Activated naive CD4-positive, alpha-beta T cell treated with anti-CD3 and anti-CD28 coated beads for 36 hours (primary cell): ENCODE measurements at regions of chr4 and their contacts with region 1.

Region 1: DNA sequence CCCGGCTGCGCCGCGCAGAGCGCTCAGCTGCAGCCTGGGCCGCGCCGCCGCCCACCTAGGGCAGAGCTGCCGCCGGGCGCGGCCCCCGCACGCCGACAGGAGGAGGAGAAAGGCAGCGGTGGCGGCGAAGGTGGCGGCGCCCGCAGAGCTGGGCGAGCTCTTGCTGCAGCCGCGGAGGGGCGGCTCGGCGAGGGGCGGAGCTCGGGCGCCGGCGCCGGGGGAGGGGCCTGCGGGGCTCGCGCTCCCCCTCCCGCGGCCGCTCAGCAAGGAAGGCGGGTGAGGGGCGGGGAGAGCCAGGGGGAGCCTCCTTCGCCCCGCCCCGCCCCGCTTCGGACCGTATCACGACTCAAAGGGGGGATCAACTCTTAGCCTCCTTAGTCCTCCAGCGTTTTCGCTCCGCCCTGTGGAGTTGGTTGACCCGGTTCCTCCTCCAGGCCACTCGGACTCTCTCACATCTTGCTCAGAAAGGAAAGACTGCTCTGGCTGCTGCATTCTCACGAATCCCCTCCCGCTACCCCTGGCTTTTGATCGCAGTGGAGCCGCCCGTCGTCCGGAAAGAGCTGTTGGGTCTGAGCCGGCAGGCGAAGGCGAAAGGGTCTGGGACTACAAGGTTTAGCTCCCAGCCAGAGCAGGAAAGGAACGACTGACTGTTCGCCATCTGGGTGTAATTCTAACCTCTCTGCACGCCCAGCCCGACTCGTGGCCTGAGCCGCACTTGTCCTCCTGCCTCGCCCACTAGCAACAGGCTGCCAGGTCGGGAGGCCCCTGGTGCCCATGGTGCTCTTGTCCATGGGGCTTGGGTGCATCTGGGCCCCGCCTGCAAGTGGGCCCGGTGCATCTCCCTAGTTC is at the start of gene ATP8A1:
- DNase-seq: peak; percentile 92
- H3K4me3 Mint-ChIP-seq: peak within 1 kb of the TSS; percentile 94
- H3K27ac Mint-ChIP-seq: peak within 1 kb of the TSS; percentile 99
- H3K4me1 Mint-ChIP-seq: peaks cover 42% of the 10 kb centered on the region
- H3K27me3 Mint-ChIP-seq: no peaks in the 10 kb centered on the region
- total RNA-seq, gene ATP8A1: 27.6 to 32.0 TPM

Region 2: GRCh38 chr4:41934815-41935651 is 722.1 kb before region 1 on chr4 and contains the start of gene TMEM33:
- CTCF ChIA-PET with region 1: no interaction called
- intact Hi-C with region 1: loop called (anchors 10 kb)
- DNase-seq: peak; percentile 87
- H3K4me3 Mint-ChIP-seq: peak within 1 kb of the TSS; percentile 97
- H3K27ac Mint-ChIP-seq: peak within 1 kb of the TSS; percentile 88
- H3K4me1 Mint-ChIP-seq: peaks cover 38% of the 10 kb centered on the region
- H3K27me3 Mint-ChIP-seq: no peaks in the 10 kb centered on the region
- total RNA-seq, gene TMEM33: 33.9 to 34.6 TPM

Region 3: DNA sequence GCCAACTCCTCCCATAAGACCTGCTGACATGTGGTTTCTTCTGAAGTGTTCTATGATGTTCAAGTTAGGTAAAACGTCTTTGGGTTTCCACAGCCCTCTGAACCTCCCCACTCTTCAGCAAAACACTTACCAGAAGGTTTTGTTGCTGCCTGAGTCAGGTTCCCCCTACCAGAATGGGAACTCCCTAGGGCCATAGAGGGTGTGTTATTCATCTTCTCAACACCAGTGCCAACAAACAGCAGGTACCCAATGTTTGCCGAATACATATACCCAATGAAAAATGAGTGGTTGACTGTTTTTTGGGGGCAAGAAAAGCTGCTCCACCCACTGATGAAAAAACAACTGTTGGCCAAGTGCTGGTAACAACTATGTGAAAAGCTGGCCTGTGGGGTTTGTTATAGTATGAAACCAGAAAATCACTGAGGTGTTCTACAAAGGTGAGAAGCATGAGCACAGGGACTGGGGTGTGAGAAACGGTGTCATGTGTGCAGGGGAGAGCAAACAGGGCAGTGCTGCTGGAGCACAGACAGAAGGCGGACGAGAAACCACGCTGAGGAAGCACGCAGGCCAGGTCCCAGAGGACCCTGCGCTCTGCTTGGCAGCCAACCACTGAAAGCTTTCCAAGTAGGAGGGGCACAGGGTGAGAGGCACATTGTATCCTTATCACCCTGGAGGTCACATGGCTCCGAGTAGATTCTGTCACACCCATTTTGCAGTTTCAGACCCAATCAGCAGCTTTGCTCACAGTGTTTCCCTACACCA is 29.1 kb before region 1 on chr4:
- CTCF ChIA-PET with region 1: interaction called, 3 read pairs
- intact Hi-C with region 1: loop called (anchors 1 kb)
- DNase-seq: peak; percentile 76
- H3K4me3 Mint-ChIP-seq: peak overlapping the region; percentile 47
- H3K27ac Mint-ChIP-seq: peak overlapping the region; percentile 88
- H3K4me1 Mint-ChIP-seq: peaks cover 57% of the 10 kb centered on the region
- H3K27me3 Mint-ChIP-seq: no peaks in the 10 kb centered on the region

Region 4: DNA sequence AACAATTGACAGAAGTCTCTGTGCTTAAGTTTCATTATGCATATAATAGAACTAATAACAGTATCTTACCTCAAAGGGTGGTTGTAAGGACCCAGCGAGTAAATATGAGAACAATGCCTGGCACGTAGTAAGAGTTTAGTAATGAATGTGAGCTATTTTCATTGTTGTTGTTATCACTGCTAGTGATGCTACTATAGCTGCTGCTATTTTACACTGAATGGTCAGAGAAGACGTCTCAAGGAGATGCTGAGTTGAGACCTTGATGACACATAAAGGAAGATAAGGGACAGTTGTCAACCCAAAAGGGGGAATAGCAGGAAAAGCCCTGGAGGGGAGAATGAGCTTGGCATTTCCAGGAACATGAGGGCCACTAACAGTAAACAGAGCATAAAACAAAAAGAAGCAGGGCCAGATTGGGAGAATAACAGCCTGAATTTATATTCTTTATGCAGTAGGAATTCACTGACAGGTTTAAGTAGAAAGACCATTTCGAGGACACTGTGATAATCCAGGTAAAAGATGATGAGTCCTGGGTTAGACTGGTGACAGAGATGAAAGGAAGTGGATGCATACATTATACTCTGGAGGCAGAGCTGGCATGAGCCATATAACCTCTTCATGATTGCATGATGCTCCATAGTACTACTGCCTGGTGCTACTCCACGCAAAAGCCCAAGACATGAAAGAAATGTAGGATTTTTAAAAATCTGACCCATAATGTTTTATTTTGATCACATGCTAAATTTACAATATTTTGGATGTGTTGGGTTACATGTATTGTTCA is 23.4 kb before region 1 on chr4:
- CTCF ChIA-PET with region 1: interaction called, 6 read pairs
- intact Hi-C with region 1: loop called (anchors 1 kb)
- DNase-seq: no peak
- H3K4me3 Mint-ChIP-seq: no peak overlapping the region
- H3K27ac Mint-ChIP-seq: peak overlapping the region; percentile 33
- H3K4me1 Mint-ChIP-seq: peaks cover 73% of the 10 kb centered on the region
- H3K27me3 Mint-ChIP-seq: no peaks in the 10 kb centered on the region

Region 5: DNA sequence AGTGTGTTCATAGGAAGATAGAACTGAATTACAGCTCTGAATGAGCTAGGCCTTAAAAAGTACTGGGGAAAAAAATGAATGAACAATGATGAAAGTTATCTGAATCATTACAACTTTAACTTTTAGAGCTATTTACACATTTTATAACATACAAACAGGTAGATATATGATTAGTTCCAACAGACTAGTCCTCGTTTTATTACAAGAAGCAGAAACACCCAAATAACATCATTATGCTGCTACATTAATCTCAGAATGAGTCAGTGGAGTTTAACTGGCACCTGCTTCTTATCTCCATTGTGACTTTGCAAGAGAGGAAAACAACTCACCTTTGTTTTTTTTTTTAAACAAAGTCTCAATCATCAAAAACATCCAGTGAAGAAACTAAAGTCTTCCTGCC is 15.5 kb before region 1 on chr4:
- CTCF ChIA-PET with region 1: interaction called, 9 read pairs
- intact Hi-C with region 1: loop called (anchors 1 kb)
- DNase-seq: no peak
- H3K4me3 Mint-ChIP-seq: peak overlapping the region; percentile 28
- H3K27ac Mint-ChIP-seq: peak overlapping the region; percentile 78
- H3K4me1 Mint-ChIP-seq: peaks cover 91% of the 10 kb centered on the region
- H3K27me3 Mint-ChIP-seq: no peaks in the 10 kb centered on the region

Region 6: GRCh38 chr4:42673082-42673425 is 15.9 kb after region 1 on chr4:
- CTCF ChIA-PET with region 1: interaction called, 11 read pairs
- intact Hi-C with region 1: loop called (anchors 1 kb)
- DNase-seq: peak; percentile 68
- H3K4me3 Mint-ChIP-seq: peak overlapping the region; percentile 49
- H3K27ac Mint-ChIP-seq: peak overlapping the region; percentile 94
- H3K4me1 Mint-ChIP-seq: peaks cover 70% of the 10 kb centered on the region
- H3K27me3 Mint-ChIP-seq: no peaks in the 10 kb centered on the region

Region 7: GRCh38 chr4:42891644-42892043 is 234.5 kb after region 1 on chr4:
- CTCF ChIA-PET with region 1: no interaction called
- intact Hi-C with region 1: no loop called
- DNase-seq: no peak
- H3K4me3 Mint-ChIP-seq: no peak overlapping the region
- H3K27ac Mint-ChIP-seq: no peak overlapping the region
- H3K4me1 Mint-ChIP-seq: no peaks in the 10 kb centered on the region
- H3K27me3 Mint-ChIP-seq: peaks cover 26% of the 10 kb centered on the region

Region 8: GRCh38 chr4:44448548-44449461 is 1791.6 kb after region 1 on chr4 and contains the start of gene KCTD8:
- CTCF ChIA-PET with region 1: no interaction called
- intact Hi-C with region 1: loop called (anchors 10 kb)
- DNase-seq: peak; percentile 74
- H3K4me3 Mint-ChIP-seq: peak within 1 kb of the TSS; percentile 62
- H3K27ac Mint-ChIP-seq: no peak within 1 kb of the TSS
- H3K4me1 Mint-ChIP-seq: peaks cover 17% of the 10 kb centered on the region
- H3K27me3 Mint-ChIP-seq: peaks cover 54% of the 10 kb centered on the region
- total RNA-seq, gene KCTD8: not detected